A549 (cell line): ENCODE measurements at regions of chr19 and their contacts with region 1.

Region 1: DNA sequence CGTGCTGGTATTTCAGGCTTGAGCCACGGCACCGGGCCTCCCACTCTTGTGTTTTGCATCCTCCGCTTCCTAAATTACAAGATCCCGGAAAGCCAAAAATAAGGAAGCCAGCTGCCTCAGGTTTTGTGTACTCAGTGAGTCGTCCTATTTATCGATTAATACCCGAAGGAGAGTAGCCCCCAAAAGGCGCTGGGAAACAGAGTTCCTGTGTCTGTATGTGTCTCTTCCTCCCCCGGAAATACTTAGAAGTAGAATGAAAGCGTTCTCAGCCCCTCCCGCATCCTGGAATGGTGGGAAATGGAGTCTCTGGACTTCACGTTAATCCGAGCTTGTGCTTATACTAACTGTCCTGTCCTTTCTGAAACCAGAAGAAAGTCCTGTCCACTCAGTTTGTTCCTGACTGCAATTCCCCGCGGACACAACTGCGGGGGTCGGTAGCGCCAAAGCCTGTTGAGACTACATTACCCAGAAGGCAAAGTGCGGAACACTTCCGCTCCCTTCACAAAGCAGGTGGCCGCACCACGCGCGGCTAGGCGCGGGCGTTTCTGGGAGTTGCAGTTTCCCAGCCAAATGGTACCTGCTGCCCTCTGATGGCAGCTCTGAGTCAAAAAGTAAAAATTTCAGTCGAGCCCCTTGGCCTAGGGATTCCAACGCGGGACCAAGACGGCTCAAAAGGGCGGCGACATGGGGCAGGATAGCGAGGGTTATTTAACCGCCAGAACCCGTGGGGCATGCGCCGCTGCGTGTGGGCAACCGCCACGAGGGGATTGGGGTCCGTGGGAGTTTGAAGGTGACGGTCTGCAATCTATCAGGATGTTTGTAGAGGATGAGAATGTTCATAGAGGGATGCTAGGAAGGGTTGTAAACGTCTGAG is 2.2 kb upstream of the GSK3A start:
- DNase-seq: peak; percentile 99
- ATAC-seq: peak; percentile 44 to 64
- H3K4me3 ChIP-seq: peak overlapping the region; percentile 65
- H3K27ac ChIP-seq: peak overlapping the region; percentile 87 to 90
- H3K4me1 ChIP-seq: peaks cover 60% of the 10 kb centered on the region
- CTCF ChIP-seq: peak; percentile 86
- EP300 ChIP-seq: no peak; a peak in 1 of 5 replicates
- POLR2A ChIP-seq: peak; percentile 18; the same call in 1 of the 2 replicates
- RAD21 ChIP-seq: peak; percentile 54 to 64

Region 2: DNA sequence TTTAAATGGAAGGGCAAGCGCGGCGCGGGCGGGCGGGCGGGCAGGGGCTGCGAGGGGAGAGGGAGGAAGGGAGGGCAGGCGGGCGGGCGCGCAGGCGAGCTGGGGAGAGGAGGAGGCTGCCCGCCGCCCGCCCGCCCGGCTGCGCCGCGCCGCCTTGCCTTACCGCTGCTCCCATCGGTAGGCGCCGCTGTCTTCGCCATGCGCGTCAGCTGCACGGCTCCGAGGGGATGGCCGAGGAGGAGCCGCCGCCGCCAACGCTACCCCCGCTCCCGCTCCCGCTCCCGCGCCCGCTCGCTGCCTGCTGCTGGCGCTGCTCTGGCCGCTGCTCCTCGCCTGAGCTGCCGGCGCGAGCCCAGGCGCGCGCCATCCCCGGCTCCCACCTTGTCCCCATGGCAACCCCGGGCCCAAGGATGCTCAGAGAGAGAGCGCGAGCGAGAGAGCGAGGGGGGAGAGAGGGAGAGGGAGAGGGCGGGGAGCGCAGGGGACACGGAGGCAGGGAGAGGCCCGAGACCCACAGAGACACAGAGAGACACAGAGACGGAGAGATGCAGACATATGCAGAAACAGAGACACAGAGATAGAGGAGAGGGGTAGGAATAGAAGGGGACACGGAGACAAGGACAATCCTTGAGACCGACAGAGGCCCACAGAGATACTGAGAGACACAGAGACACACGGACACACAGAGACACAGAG is 67.4 kb before region 1 on chr19:
- CTCF ChIA-PET with region 1: interaction called, 6 read pairs
- POLR2A ChIA-PET with region 1: interaction called, 11 read pairs
- DNase-seq: peak; percentile 90
- ATAC-seq: peak; percentile 84 to 95
- H3K4me3 ChIP-seq: peak overlapping the region; percentile 56
- H3K27ac ChIP-seq: peak overlapping the region in 1 of 2 experiments; percentile 52; a peak in 2 of 6 replicates
- H3K4me1 ChIP-seq: peaks cover 16% of the 10 kb centered on the region
- CTCF ChIP-seq: peak; percentile 73
- EP300 ChIP-seq: no peak
- POLR2A ChIP-seq: no peak
- RAD21 ChIP-seq: peak in 1 of 2 experiments; percentile 39; a peak in 2 of 5 replicates

Region 3: DNA sequence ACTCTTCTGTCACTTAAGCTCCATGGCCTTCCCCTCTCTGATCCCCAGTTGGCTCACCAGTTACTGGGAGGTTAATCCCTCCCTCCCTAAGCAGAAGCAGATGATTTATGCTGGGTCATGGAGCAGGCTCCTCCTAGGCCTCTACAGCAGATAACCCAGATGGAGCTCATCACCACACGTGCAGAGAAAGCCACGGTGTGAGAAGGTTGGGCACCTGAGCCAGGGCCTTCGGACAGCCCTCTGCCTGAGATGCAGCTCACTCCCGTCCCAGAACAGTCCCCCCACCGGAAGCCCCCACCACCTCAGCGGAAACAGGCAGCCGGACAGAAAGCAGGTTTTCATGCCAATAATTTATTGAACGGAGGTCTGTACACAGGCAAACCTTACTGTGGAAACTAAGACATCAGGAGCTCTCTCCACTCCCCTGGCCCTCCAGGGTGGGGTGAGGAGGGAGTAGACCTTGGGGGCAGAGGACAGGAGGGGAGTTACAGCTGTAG is 14.7 kb before region 1 on chr19:
- CTCF ChIA-PET with region 1: interaction called, 185 read pairs
- POLR2A ChIA-PET with region 1: interaction called, 26 read pairs
- DNase-seq: peak in 1 of 2 experiments; percentile 65
- ATAC-seq: peak; percentile 36 to 56; a peak in 5 of 6 replicates
- H3K4me3 ChIP-seq: no peak overlapping the region
- H3K27ac ChIP-seq: peak overlapping the region in 1 of 2 experiments; percentile 29; a peak in 3 of 6 replicates
- H3K4me1 ChIP-seq: peaks cover 11% of the 10 kb centered on the region; the same call in 2 of the 3 replicates
- CTCF ChIP-seq: no peak
- EP300 ChIP-seq: no peak
- POLR2A ChIP-seq: no peak
- RAD21 ChIP-seq: no peak

Region 4: DNA sequence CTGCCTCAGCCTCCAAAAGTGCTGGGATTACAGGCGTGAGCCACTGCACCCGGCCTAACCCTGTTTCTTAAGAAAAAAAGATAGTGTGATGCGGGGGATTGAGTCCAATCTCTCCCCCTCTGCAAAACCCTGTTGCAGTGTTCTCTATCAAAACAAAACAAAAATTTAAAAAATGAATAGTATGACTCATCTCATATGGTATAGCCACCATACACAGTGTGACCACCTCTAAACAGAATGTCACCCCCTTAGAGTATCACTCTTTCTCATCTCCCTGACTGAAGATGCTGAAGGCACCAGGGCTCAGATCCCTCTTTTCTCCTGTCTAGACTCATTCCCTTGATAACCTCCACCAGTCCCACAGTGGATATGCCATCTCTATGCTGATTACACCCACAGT is 17.2 kb after region 1 on chr19:
- CTCF ChIA-PET with region 1: interaction called, 82 read pairs
- POLR2A ChIA-PET with region 1: interaction called, 17 read pairs
- DNase-seq: no peak
- ATAC-seq: peak; percentile 30 to 41; a peak in 5 of 6 replicates
- H3K4me3 ChIP-seq: no peak overlapping the region
- H3K27ac ChIP-seq: no peak overlapping the region
- H3K4me1 ChIP-seq: peaks cover 12% of the 10 kb centered on the region
- CTCF ChIP-seq: no peak
- EP300 ChIP-seq: no peak
- POLR2A ChIP-seq: no peak
- RAD21 ChIP-seq: no peak

Region 5: GRCh38 chr19:42283143-42284065 is 38.8 kb after region 1 on chr19:
- CTCF ChIA-PET with region 1: interaction called, 616 read pairs
- POLR2A ChIA-PET with region 1: interaction called, 56 read pairs
- DNase-seq: peak; percentile 97 to 99
- ATAC-seq: peak; percentile 31 to 56
- H3K4me3 ChIP-seq: peak overlapping the region; percentile 76
- H3K27ac ChIP-seq: peak overlapping the region; percentile 94 to 98
- H3K4me1 ChIP-seq: peaks cover 61% of the 10 kb centered on the region
- CTCF ChIP-seq: 0 out of 3 replicates have a peak, but pooled peaks have one; percentile 5
- EP300 ChIP-seq: no peak
- POLR2A ChIP-seq: peak; percentile 35; the same call in 1 of the 2 replicates
- RAD21 ChIP-seq: no peak

Region 6: GRCh38 chr19:42325896-42326771 is 81.5 kb after region 1 on chr19:
- CTCF ChIA-PET with region 1: interaction called, 39 read pairs
- POLR2A ChIA-PET with region 1: interaction called, 5 read pairs
- DNase-seq: peak in 1 of 2 experiments; percentile 59
- ATAC-seq: peak; percentile 46 to 64
- H3K4me3 ChIP-seq: peak overlapping the region; percentile 75
- H3K27ac ChIP-seq: peak overlapping the region; percentile 85 to 90
- H3K4me1 ChIP-seq: peaks cover 19% of the 10 kb centered on the region; the same call in 2 of the 3 replicates
- CTCF ChIP-seq: peak; percentile 43
- EP300 ChIP-seq: no peak
- POLR2A ChIP-seq: peak; percentile 7; the same call in 1 of the 2 replicates
- RAD21 ChIP-seq: no peak